GM12878 (cell line): ENCODE measurements at regions of chr12 and their contacts with region 1.

Region 1: DNA sequence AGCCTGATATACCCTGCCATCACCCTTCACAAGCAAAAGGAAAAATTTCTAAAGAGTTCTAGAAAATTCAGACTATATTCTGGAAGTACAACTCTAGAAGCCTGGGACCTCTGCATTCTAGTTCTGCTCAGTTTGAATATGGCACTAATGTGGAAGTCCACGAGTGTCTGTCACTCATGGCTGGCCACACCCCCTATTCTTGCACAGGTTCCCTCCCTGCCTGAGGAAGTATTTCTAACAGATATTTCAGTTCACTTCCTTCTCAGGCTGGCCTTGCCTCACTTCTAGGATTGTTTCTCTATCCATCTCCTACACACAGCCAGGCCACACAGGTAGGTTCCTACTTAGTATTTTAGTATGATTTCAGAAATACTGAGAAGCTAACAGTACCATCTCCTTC is 67.4 kb downstream of the PHLDA1 start:
- DNase-seq: no peak
- ATAC-seq: peak; percentile 74
- H3K4me3 ChIP-seq: no peak overlapping the region
- H3K27ac ChIP-seq: no peak overlapping the region
- H3K4me1 ChIP-seq: no peaks in the 10 kb centered on the region
- H3K27me3 ChIP-seq: no peaks in the 10 kb centered on the region
- CTCF ChIP-seq: no peak
- EP300 ChIP-seq: no peak
- POLR2A ChIP-seq: no peak
- RAD21 ChIP-seq: no peak

Region 2: GRCh38 chr12:75250964-75251363 is 713.2 kb before region 1 on chr12:
- CTCF ChIA-PET with region 1: no interaction called
- POLR2A ChIA-PET with region 1: no interaction called
- RAD21 ChIA-PET with region 1: no interaction called
- SMC1A ChIA-PET with region 1: no interaction called
- in situ Hi-C with region 1: no loop called
- intact Hi-C with region 1: no loop called
- DNase-seq: no peak
- ATAC-seq: no peak
- H3K4me3 ChIP-seq: no peak overlapping the region
- H3K27ac ChIP-seq: no peak overlapping the region
- H3K4me1 ChIP-seq: no peaks in the 10 kb centered on the region
- H3K27me3 ChIP-seq: no peaks in the 10 kb centered on the region
- CTCF ChIP-seq: no peak
- EP300 ChIP-seq: no peak
- POLR2A ChIP-seq: no peak
- RAD21 ChIP-seq: no peak

Region 3: GRCh38 chr12:75837700-75838099 is 126.5 kb before region 1 on chr12:
- CTCF ChIA-PET with region 1: no interaction called
- POLR2A ChIA-PET with region 1: no interaction called
- RAD21 ChIA-PET with region 1: no interaction called
- SMC1A ChIA-PET with region 1: no interaction called
- in situ Hi-C with region 1: no loop called
- intact Hi-C with region 1: no loop called
- DNase-seq: no peak
- ATAC-seq: peak; percentile 26; the same call in 1 of the 3 replicates
- H3K4me3 ChIP-seq: no peak overlapping the region
- H3K27ac ChIP-seq: no peak overlapping the region
- H3K4me1 ChIP-seq: no peaks in the 10 kb centered on the region
- H3K27me3 ChIP-seq: no peaks in the 10 kb centered on the region
- CTCF ChIP-seq: no peak
- EP300 ChIP-seq: no peak
- POLR2A ChIP-seq: no peak
- RAD21 ChIP-seq: no peak

Region 4: DNA sequence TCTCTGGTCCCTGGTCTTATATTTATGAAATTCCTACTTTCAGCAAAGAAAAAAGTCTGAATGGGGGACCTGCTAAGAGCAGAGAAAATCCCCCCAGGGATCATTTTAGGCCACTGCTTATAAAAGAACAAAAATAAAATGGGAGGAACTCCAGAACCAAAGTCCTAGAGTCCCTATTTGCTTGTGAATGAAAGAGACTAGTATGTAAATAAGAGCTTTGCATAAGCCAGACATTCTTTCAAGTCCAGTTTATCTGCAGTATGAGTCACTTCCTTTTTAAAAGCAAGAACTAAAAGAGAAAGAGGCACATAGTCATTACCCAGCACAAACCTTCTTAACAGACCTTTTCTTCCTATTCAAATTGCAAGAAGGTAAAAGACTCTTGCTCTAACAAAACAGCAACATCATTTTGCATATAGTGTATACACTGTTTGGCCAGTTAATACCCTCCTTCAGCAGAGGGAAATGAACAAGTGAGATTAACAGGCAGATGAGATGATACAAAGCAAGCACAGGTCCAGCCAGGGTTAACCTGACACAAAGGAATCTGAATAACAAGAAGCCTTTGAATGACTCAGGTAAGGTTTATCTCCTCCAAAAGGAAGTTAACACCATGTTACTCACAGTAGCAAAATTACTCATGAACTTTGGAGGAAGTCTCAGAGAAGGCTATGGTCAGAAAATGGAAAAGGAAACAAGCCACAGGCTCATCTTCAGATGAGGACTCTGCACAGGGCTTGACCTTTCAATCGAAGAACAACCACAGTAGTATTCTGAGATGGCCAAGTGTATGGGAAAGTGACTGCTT is 19.8 kb before region 1 on chr12:
- CTCF ChIA-PET with region 1: interaction called, 3 read pairs
- POLR2A ChIA-PET with region 1: interaction called, 9 read pairs
- RAD21 ChIA-PET with region 1: interaction called, 6 read pairs
- SMC1A ChIA-PET with region 1: interaction called, 16 read pairs
- in situ Hi-C with region 1: no loop called
- intact Hi-C with region 1: no loop called
- DNase-seq: peak; percentile 54
- ATAC-seq: peak; percentile 92
- H3K4me3 ChIP-seq: no peak overlapping the region
- H3K27ac ChIP-seq: peak overlapping the region; percentile 37
- H3K4me1 ChIP-seq: peaks cover 18% of the 10 kb centered on the region
- H3K27me3 ChIP-seq: no peaks in the 10 kb centered on the region
- CTCF ChIP-seq: no peak
- EP300 ChIP-seq: 0 out of 4 replicates have a peak, but pooled peaks of 1 of the 2 experiments have one; percentile 24
- POLR2A ChIP-seq: no peak
- RAD21 ChIP-seq: no peak

Region 5: GRCh38 chr12:75986001-75986746 is 22.0 kb after region 1 on chr12:
- CTCF ChIA-PET with region 1: interaction called, 3 read pairs
- POLR2A ChIA-PET with region 1: interaction called, 5 read pairs
- RAD21 ChIA-PET with region 1: interaction called, 6 read pairs
- SMC1A ChIA-PET with region 1: interaction called, 58 read pairs
- in situ Hi-C with region 1: no loop called
- intact Hi-C with region 1: no loop called
- DNase-seq: no peak
- ATAC-seq: peak; percentile 60
- H3K4me3 ChIP-seq: no peak overlapping the region
- H3K27ac ChIP-seq: no peak overlapping the region
- H3K4me1 ChIP-seq: peaks cover 17% of the 10 kb centered on the region
- H3K27me3 ChIP-seq: no peaks in the 10 kb centered on the region
- CTCF ChIP-seq: no peak
- EP300 ChIP-seq: peak in 1 of 2 experiments; percentile 54; a peak in 1 of 4 replicates
- POLR2A ChIP-seq: no peak
- RAD21 ChIP-seq: no peak

Region 6: DNA sequence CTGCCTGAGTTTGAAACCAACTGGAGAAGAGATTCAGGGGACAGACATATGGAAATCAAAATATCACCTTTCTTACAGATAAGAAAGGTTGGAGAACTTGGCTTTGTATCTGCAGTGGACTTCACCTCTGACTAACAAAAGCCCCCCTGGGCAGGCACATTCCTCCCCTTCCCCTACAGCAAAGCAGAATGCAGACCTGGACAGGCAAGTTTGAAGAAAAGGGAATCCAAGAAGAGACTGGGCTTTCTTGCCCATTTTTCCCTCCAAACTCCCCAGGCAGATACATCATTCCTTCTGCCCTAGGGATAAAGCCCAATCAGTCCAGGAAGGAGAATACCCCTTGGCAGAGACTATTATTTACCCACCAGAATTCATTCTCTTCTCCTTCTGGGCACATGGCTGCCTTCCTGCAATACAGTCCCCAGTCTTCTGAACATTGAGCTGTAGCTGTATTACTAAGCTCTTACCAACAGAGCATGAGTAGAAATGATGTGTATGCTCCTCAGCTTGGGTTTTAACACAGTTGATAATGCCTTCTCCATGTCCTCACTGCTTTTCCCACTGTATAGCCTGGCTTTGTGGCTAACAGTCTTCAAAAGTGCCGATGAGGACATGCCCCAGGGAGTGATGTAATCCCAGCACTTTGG is 137.7 kb after region 1 on chr12:
- CTCF ChIA-PET with region 1: no interaction called
- POLR2A ChIA-PET with region 1: no interaction called
- RAD21 ChIA-PET with region 1: no interaction called
- SMC1A ChIA-PET with region 1: no interaction called
- in situ Hi-C with region 1: no loop called
- intact Hi-C with region 1: no loop called
- DNase-seq: no peak
- ATAC-seq: no peak
- H3K4me3 ChIP-seq: no peak overlapping the region
- H3K27ac ChIP-seq: no peak overlapping the region
- H3K4me1 ChIP-seq: no peaks in the 10 kb centered on the region
- H3K27me3 ChIP-seq: no peaks in the 10 kb centered on the region; a peak in 2 of 4 replicates
- CTCF ChIP-seq: no peak
- EP300 ChIP-seq: no peak
- POLR2A ChIP-seq: no peak
- RAD21 ChIP-seq: no peak